CD4-positive, alpha-beta T cell (primary cell): ENCODE measurements at regions of chr20 and their contacts with region 1.

Region 1: DNA sequence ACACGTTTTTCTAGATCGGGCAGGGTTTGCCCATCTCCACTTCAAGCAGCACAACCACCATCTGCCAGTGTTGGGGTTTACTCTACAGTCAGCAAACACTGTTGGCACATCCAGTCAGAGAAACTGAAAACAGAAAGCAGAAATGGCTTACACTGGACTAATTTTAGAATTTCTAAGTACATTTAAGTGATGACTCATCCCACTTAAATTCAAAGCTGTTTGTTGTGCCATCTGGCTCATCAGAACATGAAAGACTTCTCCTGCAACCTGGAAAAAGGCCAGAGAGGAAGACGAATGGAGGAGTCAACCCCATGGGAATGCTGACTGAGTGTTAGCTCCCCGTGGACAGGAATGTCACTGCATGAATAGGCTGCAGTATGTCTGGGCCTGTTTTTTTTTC is 21.8 kb downstream of the FAM209B start:
- DNase-seq: peak in 3 of 14 experiments; percentile 16 to 29 (median 23)
- ATAC-seq: no peak
- H3K4me3 ChIP-seq: no peak overlapping the region
- H3K4me3 Mint-ChIP-seq: no peak overlapping the region
- H3K27ac ChIP-seq: no peak overlapping the region
- H3K27ac Mint-ChIP-seq: no peak overlapping the region
- H3K4me1 ChIP-seq: no peaks in the 10 kb centered on the region
- H3K4me1 Mint-ChIP-seq: no peaks in the 10 kb centered on the region
- H3K27me3 ChIP-seq: no peaks in the 10 kb centered on the region
- H3K27me3 Mint-ChIP-seq: no peaks in the 10 kb centered on the region
- CTCF ChIP-seq: no peak

Region 2: GRCh38 chr20:56373940-56374339 is 180.9 kb before region 1 on chr20:
- CTCF ChIA-PET with region 1: no interaction called
- POLR2A ChIA-PET with region 1: no interaction called
- intact Hi-C with region 1: no loop called
- DNase-seq: peak in 3 of 14 experiments; percentile 22 to 55 (median 46)
- ATAC-seq: peak; percentile 32
- H3K4me3 ChIP-seq: no peak overlapping the region
- H3K4me3 Mint-ChIP-seq: no peak overlapping the region
- H3K27ac ChIP-seq: no peak overlapping the region
- H3K27ac Mint-ChIP-seq: no peak overlapping the region
- H3K4me1 ChIP-seq: no peaks in the 10 kb centered on the region
- H3K4me1 Mint-ChIP-seq: no peaks in the 10 kb centered on the region
- H3K27me3 ChIP-seq: no peaks in the 10 kb centered on the region
- H3K27me3 Mint-ChIP-seq: no peaks in the 10 kb centered on the region
- CTCF ChIP-seq: no peak

Region 3: DNA sequence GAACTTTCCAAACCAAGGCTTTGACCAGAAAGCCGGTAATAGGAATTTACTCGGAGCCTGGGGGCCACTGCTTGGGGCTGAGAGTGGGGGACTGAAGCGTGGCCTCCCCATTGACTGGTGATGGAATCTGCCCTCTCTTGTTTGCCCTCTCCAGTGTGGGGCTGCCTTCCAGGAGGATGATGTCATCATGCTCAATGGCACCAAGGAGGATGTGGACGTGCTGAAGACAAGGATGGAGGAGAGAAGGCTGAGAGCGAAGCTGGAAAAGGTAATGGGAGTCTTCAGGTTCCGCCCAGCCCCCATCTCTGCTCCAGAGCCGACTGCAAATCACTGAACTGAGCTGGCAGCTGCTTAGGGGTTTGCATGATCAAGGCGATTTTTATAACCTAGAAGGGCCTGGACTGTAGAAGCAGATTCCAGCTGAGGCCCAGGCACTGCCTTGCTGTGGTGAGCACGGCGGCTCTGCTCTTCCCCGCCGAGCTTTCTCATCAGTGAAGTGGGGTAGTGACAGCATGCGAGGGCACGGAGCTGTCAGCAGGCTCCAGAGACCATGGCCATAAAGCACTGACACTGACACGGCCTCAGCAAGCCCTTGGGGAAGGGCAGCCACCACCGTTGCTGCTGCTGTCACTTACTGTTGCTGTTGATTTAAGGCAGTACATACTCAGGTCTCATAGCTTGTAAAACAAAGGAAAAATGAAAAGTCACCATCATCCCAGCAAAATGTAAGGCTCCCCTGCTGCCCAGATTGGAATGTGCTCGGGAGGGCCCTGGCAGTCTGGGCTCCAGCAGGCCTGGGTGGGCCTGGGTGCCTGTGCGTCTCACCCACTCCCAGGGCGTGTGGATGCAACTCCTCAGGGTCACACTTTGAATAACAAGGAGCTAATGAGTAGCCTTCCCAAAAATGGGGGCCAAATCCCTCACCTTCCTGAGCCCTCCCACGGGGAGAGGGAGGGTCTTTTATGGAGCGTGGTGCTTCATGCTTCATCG is 41.4 kb before region 1 on chr20:
- CTCF ChIA-PET with region 1: no interaction called
- POLR2A ChIA-PET with region 1: no interaction called
- intact Hi-C with region 1: no loop called
- DNase-seq: no peak
- ATAC-seq: no peak
- H3K4me3 ChIP-seq: no peak overlapping the region
- H3K4me3 Mint-ChIP-seq: no peak overlapping the region
- H3K27ac ChIP-seq: no peak overlapping the region
- H3K27ac Mint-ChIP-seq: no peak overlapping the region
- H3K4me1 ChIP-seq: no peaks in the 10 kb centered on the region
- H3K4me1 Mint-ChIP-seq: no peaks in the 10 kb centered on the region
- H3K27me3 ChIP-seq: no peaks in the 10 kb centered on the region
- H3K27me3 Mint-ChIP-seq: no peaks in the 10 kb centered on the region
- CTCF ChIP-seq: no peak

Region 4: GRCh38 chr20:56974499-56975236 is 419.8 kb after region 1 on chr20:
- CTCF ChIA-PET with region 1: no interaction called
- POLR2A ChIA-PET with region 1: no interaction called
- intact Hi-C with region 1: loop called in 1 of 2 experiments (anchors 10 kb)
- DNase-seq: peak in 2 of 14 experiments; percentile 1 to 9
- ATAC-seq: no peak
- H3K4me3 ChIP-seq: no peak overlapping the region
- H3K4me3 Mint-ChIP-seq: no peak overlapping the region
- H3K27ac ChIP-seq: no peak overlapping the region
- H3K27ac Mint-ChIP-seq: no peak overlapping the region
- H3K4me1 ChIP-seq: no peaks in the 10 kb centered on the region
- H3K4me1 Mint-ChIP-seq: no peaks in the 10 kb centered on the region
- H3K27me3 ChIP-seq: peaks cover 20 to 27% of the 10 kb centered on the region in 2 experiments
- H3K27me3 Mint-ChIP-seq: peaks cover 75% of the 10 kb centered on the region
- CTCF ChIP-seq: no peak